ENCODE measurements at regions of chr20 and their contacts with region 1.

Region 1: GRCh38 chr20:47677635-47678453 is 107.4 kb downstream of the SULF2 start:
- DNase-seq: peak in 5 of 7 donors; percentile 40 to 68 (median 49)
- H3K4me3 ChIP-seq: no peak overlapping the region
- H3K27ac ChIP-seq: no peak overlapping the region
- H3K4me1 ChIP-seq: no peaks in the 10 kb centered on the region
- H3K27me3 ChIP-seq: no peaks in the 10 kb centered on the region
- CTCF ChIP-seq: peak; percentile 55 to 77 (median 68)
- POLR2A ChIP-seq: no peak

Region 2: GRCh38 chr20:47191074-47191673 is 486.7 kb before region 1 on chr20:
- intact Hi-C with region 1: no loop called
- DNase-seq: no peak
- H3K4me3 ChIP-seq: no peak overlapping the region
- H3K27ac ChIP-seq: no peak overlapping the region
- H3K4me1 ChIP-seq: no peaks in the 10 kb centered on the region
- H3K27me3 ChIP-seq: no peaks in the 10 kb centered on the region
- CTCF ChIP-seq: no peak
- POLR2A ChIP-seq: no peak

Region 3: GRCh38 chr20:47772995-47773716 is 95.3 kb after region 1 on chr20:
- intact Hi-C with region 1: loop called in 1 of 2 experiments (anchors 10 kb)
- DNase-seq: peak in 1 of 7 donors; percentile 40
- H3K4me3 ChIP-seq: no peak overlapping the region
- H3K27ac ChIP-seq: peak overlapping the region in 1 of 5 donors; percentile 65
- H3K4me1 ChIP-seq: peaks cover 0 to 9% of the 10 kb centered on the region in 2 donors
- H3K27me3 ChIP-seq: no peaks in the 10 kb centered on the region
- CTCF ChIP-seq: no peak
- POLR2A ChIP-seq: no peak

Region 4: GRCh38 chr20:47785854-47786764 is 108.3 kb after region 1 on chr20:
- intact Hi-C with region 1: loop called in 1 of 2 experiments (anchors 10 kb)
- DNase-seq: peak; percentile 61 to 85 (median 71)
- H3K4me3 ChIP-seq: peak overlapping the region in 2 of 4 donors; percentile 1 to 50
- H3K27ac ChIP-seq: peak overlapping the region in 4 of 5 donors; percentile 12 to 87 (median 50)
- H3K4me1 ChIP-seq: peaks cover 7 to 24% of the 10 kb centered on the region in 2 donors
- H3K27me3 ChIP-seq: no peaks in the 10 kb centered on the region
- CTCF ChIP-seq: peak; percentile 47 to 79 (median 62)
- POLR2A ChIP-seq: peak in 1 of 2 donors; percentile 20

Region 5: GRCh38 chr20:48614575-48615279 is 936.9 kb after region 1 on chr20:
- intact Hi-C with region 1: loop called in 1 of 2 experiments (anchors 5 kb)
- DNase-seq: no peak
- H3K4me3 ChIP-seq: no peak overlapping the region
- H3K27ac ChIP-seq: no peak overlapping the region
- H3K4me1 ChIP-seq: peaks cover 0 to under 1% of the 10 kb centered on the region in 2 donors
- H3K27me3 ChIP-seq: no peaks in the 10 kb centered on the region
- CTCF ChIP-seq: no peak
- POLR2A ChIP-seq: no peak